ENCODE measurements at regions of chr4 and their contacts with region 1.

Region 1: DNA sequence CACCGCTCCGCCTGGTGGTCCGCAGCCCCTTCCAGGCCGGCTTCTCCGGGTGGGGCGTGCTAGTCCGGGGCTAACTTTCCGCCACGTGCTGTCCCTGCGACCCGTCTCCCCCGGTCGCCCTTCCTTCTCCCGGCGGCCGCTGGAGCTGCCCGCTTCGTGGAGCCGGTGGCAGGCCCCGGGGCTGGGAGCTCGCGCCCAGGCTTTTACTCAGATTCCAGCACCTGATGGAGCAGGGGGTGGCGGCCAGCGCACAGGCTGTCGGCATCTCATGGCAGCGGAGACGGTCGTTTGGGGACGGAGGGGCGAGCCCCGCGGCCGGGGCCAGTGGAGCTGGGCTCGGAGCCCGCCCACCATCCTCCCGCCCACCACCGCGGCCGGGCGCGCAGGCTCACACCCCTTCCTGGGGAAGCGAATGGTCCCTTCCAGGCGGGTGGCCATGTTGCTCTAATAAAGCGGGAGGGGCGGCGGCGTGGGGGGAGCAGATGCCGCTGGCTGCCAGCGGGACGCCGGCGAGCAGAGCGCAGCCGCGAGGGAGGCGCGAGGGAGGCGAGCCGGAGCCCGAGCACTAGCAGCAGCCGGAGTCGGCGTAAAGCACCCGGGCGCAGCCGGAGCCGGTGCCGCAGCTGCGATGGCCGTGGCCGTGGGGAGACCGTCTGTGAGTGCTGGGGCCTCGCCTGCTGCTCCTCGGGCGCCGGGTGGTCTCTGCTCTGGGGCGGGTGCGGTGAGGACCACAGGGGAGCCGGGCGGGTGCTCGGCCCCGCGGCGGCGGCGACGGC is at the start of gene SEPTIN11:
- DNase-seq: peak; percentile 56 to 78 (median 72)
- ATAC-seq: peak; percentile 87
- H3K4me3 ChIP-seq: peak within 1 kb of the TSS; percentile 80
- H3K4me3 Mint-ChIP-seq: peak within 1 kb of the TSS; percentile 70 to 97 (median 88)
- H3K27ac ChIP-seq: peak within 1 kb of the TSS; percentile 58
- H3K27ac Mint-ChIP-seq: peak within 1 kb of the TSS in 7 of 9 donors; percentile 28 to 82 (median 71)
- H3K4me1 ChIP-seq: peaks cover 0 to 10% of the 10 kb centered on the region in 2 donors
- H3K4me1 Mint-ChIP-seq: peaks cover 8 to 23% (median 16%) of the 10 kb centered on the region in 7 donors
- H3K27me3 ChIP-seq: peaks cover 0 to 6% of the 10 kb centered on the region in 2 donors
- H3K27me3 Mint-ChIP-seq: peaks cover 0 to 71% (median 4%) of the 10 kb centered on the region in 5 donors
- total RNA-seq, gene SEPTIN11: 12.2 to 29.3 (median 20.3) TPM

Region 2: GRCh38 chr4:76758290-76758882 is 191.1 kb before region 1 on chr4:
- CTCF ChIA-PET with region 1: no interaction called
- POLR2A ChIA-PET with region 1: no interaction called
- intact Hi-C with region 1: no loop called
- DNase-seq: no peak
- ATAC-seq: peak; percentile 39
- H3K4me3 ChIP-seq: no peak overlapping the region
- H3K4me3 Mint-ChIP-seq: no peak overlapping the region
- H3K27ac ChIP-seq: no peak overlapping the region
- H3K27ac Mint-ChIP-seq: no peak overlapping the region
- H3K4me1 ChIP-seq: no peaks in the 10 kb centered on the region
- H3K4me1 Mint-ChIP-seq: peaks cover 0 to 4% (median 0%) of the 10 kb centered on the region in 7 donors
- H3K27me3 ChIP-seq: no peaks in the 10 kb centered on the region
- H3K27me3 Mint-ChIP-seq: peaks cover 0 to 13% (median 7%) of the 10 kb centered on the region in 5 donors

Region 3: DNA sequence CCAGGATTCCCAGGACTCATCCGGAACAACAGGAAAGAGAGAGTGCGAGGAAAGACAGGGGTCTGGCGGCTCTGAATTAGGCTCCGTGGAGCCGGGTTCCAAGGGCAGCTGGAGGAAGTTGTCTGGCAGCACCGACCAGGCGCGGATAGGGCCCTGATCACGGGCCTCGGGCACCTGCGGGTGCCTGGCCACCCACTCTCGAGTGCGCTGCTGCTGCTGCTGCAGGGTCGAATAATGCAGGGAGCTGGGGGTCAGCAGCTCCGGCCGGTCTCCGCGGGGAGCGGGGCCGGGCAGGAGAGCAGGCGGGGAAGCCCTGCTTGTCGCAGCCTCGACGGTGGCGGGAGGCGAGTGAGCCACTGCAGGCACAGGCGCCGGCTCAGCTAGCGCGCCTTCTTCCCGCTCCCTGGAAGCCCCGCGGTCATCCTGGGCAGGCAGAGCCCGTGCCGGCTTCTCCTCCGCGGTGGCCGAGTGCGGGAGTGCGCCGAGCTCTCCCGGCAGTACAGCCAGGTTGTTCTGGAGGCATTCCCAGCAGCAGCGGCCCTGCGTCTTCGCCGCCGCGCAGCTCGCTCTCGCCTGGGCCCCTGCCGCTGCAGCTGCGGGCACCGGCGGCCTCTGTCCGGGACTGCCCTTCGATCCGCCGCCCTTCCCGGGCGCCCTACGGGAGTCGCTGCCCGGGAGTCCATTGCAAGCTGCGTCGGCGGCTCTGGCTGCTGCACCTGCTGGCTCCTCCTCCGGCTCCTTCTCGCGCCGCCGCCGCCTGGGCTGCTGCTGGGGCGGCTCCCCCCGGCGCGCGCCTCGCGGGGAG is 52.5 kb before region 1 on chr4:
- CTCF ChIA-PET with region 1: no interaction called
- POLR2A ChIA-PET with region 1: no interaction called
- intact Hi-C with region 1: loop called in 1 of 2 experiments (anchors 1 kb)
- DNase-seq: peak; percentile 16 to 47 (median 29)
- ATAC-seq: peak; percentile 64
- H3K4me3 ChIP-seq: peak overlapping the region; percentile 49
- H3K4me3 Mint-ChIP-seq: peak overlapping the region in 9 of 10 donors; percentile 13 to 78 (median 64)
- H3K27ac ChIP-seq: no peak overlapping the region
- H3K27ac Mint-ChIP-seq: no peak overlapping the region
- H3K4me1 ChIP-seq: peaks cover 0 to 4% of the 10 kb centered on the region in 2 donors
- H3K4me1 Mint-ChIP-seq: peaks cover 5 to 13% (median 10%) of the 10 kb centered on the region in 7 donors
- H3K27me3 ChIP-seq: peaks cover 8 to 12% of the 10 kb centered on the region in 2 donors
- H3K27me3 Mint-ChIP-seq: peaks cover 26 to 63% (median 34%) of the 10 kb centered on the region in 5 donors

Region 4: DNA sequence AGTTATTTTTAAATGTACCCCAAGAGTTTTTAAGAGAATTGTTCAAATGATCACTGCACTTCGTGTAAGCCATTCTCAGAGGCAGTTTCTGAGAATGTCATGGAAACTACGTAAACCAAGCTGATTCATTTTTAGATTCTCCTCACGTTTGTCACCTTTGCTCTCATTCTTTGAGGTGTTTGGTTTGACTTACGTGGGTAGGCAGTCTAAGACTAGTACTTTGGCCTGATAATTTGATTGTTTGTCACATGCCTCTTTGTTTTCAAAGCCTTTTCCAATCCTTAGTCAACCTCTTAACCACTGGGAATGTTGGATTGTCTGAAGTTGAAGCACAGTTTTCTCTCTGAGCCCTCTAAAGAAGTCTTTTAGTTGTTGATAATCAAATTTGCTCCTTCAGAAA is 10.6 kb after region 1 on chr4:
- CTCF ChIA-PET with region 1: no interaction called
- POLR2A ChIA-PET with region 1: no interaction called
- intact Hi-C with region 1: loop called in 1 of 2 experiments (anchors 1 kb)
- DNase-seq: no peak
- ATAC-seq: no peak
- H3K4me3 ChIP-seq: no peak overlapping the region
- H3K4me3 Mint-ChIP-seq: no peak overlapping the region
- H3K27ac ChIP-seq: no peak overlapping the region
- H3K27ac Mint-ChIP-seq: no peak overlapping the region
- H3K4me1 ChIP-seq: no peaks in the 10 kb centered on the region
- H3K4me1 Mint-ChIP-seq: peaks cover 3 to 27% (median 17%) of the 10 kb centered on the region in 7 donors
- H3K27me3 ChIP-seq: no peaks in the 10 kb centered on the region
- H3K27me3 Mint-ChIP-seq: peaks cover 0 to 41% (median 0%) of the 10 kb centered on the region in 5 donors

Region 5: DNA sequence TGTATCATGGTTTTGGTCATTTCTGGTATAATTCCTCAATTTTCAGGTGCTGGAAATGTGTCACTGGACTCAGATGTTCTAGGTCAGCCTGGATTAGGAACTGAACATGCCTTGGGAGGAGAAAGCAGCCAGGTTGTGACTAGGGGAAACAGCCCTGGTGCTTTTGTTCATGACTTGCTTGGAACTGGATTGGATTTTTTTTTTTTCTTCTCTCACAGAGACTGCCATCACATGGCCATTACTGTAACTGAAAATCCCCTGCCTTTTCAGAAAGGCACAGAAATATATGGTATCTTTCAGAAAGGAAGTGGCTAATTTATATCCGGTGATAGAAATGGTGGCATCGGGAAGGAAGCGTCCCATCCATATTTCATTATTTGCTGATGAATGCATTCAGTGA is 34.7 kb after region 1 on chr4:
- CTCF ChIA-PET with region 1: no interaction called
- POLR2A ChIA-PET with region 1: interaction called, 8 read pairs
- intact Hi-C with region 1: loop called (anchors 1 to 2 kb)
- DNase-seq: peak in 4 of 9 donors; percentile 17 to 34 (median 22)
- ATAC-seq: peak; percentile 68
- H3K4me3 ChIP-seq: no peak overlapping the region
- H3K4me3 Mint-ChIP-seq: peak overlapping the region; percentile 19 to 72 (median 52)
- H3K27ac ChIP-seq: no peak overlapping the region
- H3K27ac Mint-ChIP-seq: peak overlapping the region in 6 of 9 donors; percentile 33 to 61 (median 44)
- H3K4me1 ChIP-seq: peaks cover 35 to 37% of the 10 kb centered on the region in 2 donors
- H3K4me1 Mint-ChIP-seq: peaks cover 36 to 92% (median 79%) of the 10 kb centered on the region in 7 donors
- H3K27me3 ChIP-seq: no peaks in the 10 kb centered on the region
- H3K27me3 Mint-ChIP-seq: peaks cover 0 to 34% (median 0%) of the 10 kb centered on the region in 5 donors

Region 6: GRCh38 chr4:77025643-77026321 is 76.3 kb after region 1 on chr4:
- CTCF ChIA-PET with region 1: no interaction called
- POLR2A ChIA-PET with region 1: no interaction called
- intact Hi-C with region 1: loop called in 1 of 2 experiments (anchors 5 kb)
- DNase-seq: peak in 1 of 9 donors; percentile 30
- ATAC-seq: no peak
- H3K4me3 ChIP-seq: no peak overlapping the region
- H3K4me3 Mint-ChIP-seq: peak overlapping the region in 1 of 10 donors; percentile 54
- H3K27ac ChIP-seq: no peak overlapping the region
- H3K27ac Mint-ChIP-seq: peak overlapping the region in 1 of 9 donors; percentile 40
- H3K4me1 ChIP-seq: peaks cover 0 to 13% of the 10 kb centered on the region in 2 donors
- H3K4me1 Mint-ChIP-seq: peaks cover 13 to 36% (median 29%) of the 10 kb centered on the region in 7 donors
- H3K27me3 ChIP-seq: no peaks in the 10 kb centered on the region
- H3K27me3 Mint-ChIP-seq: peaks cover 0 to 3% (median 0%) of the 10 kb centered on the region in 5 donors

Region 7: GRCh38 chr4:77044461-77045150 is 95.1 kb after region 1 on chr4:
- CTCF ChIA-PET with region 1: interaction called, 3 read pairs
- POLR2A ChIA-PET with region 1: no interaction called
- intact Hi-C with region 1: loop called (anchors 1 kb)
- DNase-seq: peak in 7 of 9 donors; percentile 20 to 55 (median 43)
- ATAC-seq: peak; percentile 61
- H3K4me3 ChIP-seq: no peak overlapping the region
- H3K4me3 Mint-ChIP-seq: no peak overlapping the region
- H3K27ac ChIP-seq: no peak overlapping the region
- H3K27ac Mint-ChIP-seq: peak overlapping the region in 8 of 9 donors; percentile 19 to 93 (median 52)
- H3K4me1 ChIP-seq: peaks cover 0 to 8% of the 10 kb centered on the region in 2 donors
- H3K4me1 Mint-ChIP-seq: peaks cover 9 to 34% (median 23%) of the 10 kb centered on the region in 7 donors
- H3K27me3 ChIP-seq: no peaks in the 10 kb centered on the region
- H3K27me3 Mint-ChIP-seq: no peaks in the 10 kb centered on the region

Region 8: GRCh38 chr4:77203380-77204197 is 254.1 kb after region 1 on chr4:
- CTCF ChIA-PET with region 1: no interaction called
- POLR2A ChIA-PET with region 1: no interaction called
- intact Hi-C with region 1: loop called (anchors 5 to 10 kb)
- DNase-seq: peak; percentile 23 to 73 (median 61)
- ATAC-seq: peak; percentile 87
- H3K4me3 ChIP-seq: no peak overlapping the region
- H3K4me3 Mint-ChIP-seq: no peak overlapping the region
- H3K27ac ChIP-seq: no peak overlapping the region
- H3K27ac Mint-ChIP-seq: no peak overlapping the region
- H3K4me1 ChIP-seq: no peaks in the 10 kb centered on the region
- H3K4me1 Mint-ChIP-seq: peaks cover 0 to 7% (median 0%) of the 10 kb centered on the region in 7 donors
- H3K27me3 ChIP-seq: no peaks in the 10 kb centered on the region
- H3K27me3 Mint-ChIP-seq: peaks cover 0 to 25% (median 5%) of the 10 kb centered on the region in 5 donors

Measured in naive thymus-derived CD4-positive, alpha-beta T cell (primary cell).